ENCODE measurements at regions of chr19 and their contacts with region 1.

Region 1: GRCh38 chr19:2151339-2152229 is at the start of gene AP3D1:
- DNase-seq: peak; percentile 100
- H3K4me3 ChIP-seq: peak within 1 kb of the TSS; percentile 42 to 83
- H3K4me3 Mint-ChIP-seq: peak within 1 kb of the TSS; percentile 76 to 89 (median 84)
- H3K27ac ChIP-seq: peak within 1 kb of the TSS; percentile 94
- H3K27ac Mint-ChIP-seq: peak within 1 kb of the TSS; percentile 89 to 98 (median 95)
- H3K4me1 ChIP-seq: peaks cover 42% of the 10 kb centered on the region
- H3K4me1 Mint-ChIP-seq: peaks cover 23 to 43% (median 35%) of the 10 kb centered on the region in 4 donors
- H3K27me3 ChIP-seq: no peaks in the 10 kb centered on the region
- H3K27me3 Mint-ChIP-seq: no peaks in the 10 kb centered on the region
- total RNA-seq, gene AP3D1: 80.6 to 87.2 TPM

Region 2: GRCh38 chr19:1942078-1942933 is 209.3 kb before region 1 on chr19:
- CTCF ChIA-PET with region 1: no interaction called
- POLR2A ChIA-PET with region 1: interaction called, 6 read pairs
- intact Hi-C with region 1: loop called (anchors 1 kb)
- DNase-seq: peak; percentile 78 to 89 (median 84)
- H3K4me3 ChIP-seq: peak overlapping the region; percentile 81 to 99
- H3K4me3 Mint-ChIP-seq: peak overlapping the region; percentile 90 to 99 (median 97)
- H3K27ac ChIP-seq: peak overlapping the region; percentile 91
- H3K27ac Mint-ChIP-seq: peak overlapping the region; percentile 97 to 100 (median 99)
- H3K4me1 ChIP-seq: peaks cover 45% of the 10 kb centered on the region
- H3K4me1 Mint-ChIP-seq: peaks cover 15 to 49% (median 33%) of the 10 kb centered on the region in 4 donors
- H3K27me3 ChIP-seq: no peaks in the 10 kb centered on the region
- H3K27me3 Mint-ChIP-seq: peaks cover 0 to 2% of the 10 kb centered on the region in 2 donors

Region 3: GRCh38 chr19:2041683-2042484 is 109.7 kb before region 1 on chr19:
- CTCF ChIA-PET with region 1: no interaction called
- POLR2A ChIA-PET with region 1: interaction called, 3 read pairs
- intact Hi-C with region 1: loop called (anchors 5 kb)
- DNase-seq: peak; percentile 99 to 100 (median 99)
- H3K4me3 ChIP-seq: peak overlapping the region; percentile 36 to 57
- H3K4me3 Mint-ChIP-seq: peak overlapping the region; percentile 28 to 74 (median 60)
- H3K27ac ChIP-seq: peak overlapping the region; percentile 97
- H3K27ac Mint-ChIP-seq: peak overlapping the region; percentile 92 to 98 (median 96)
- H3K4me1 ChIP-seq: peaks cover 61% of the 10 kb centered on the region
- H3K4me1 Mint-ChIP-seq: peaks cover 9 to 51% (median 27%) of the 10 kb centered on the region in 4 donors
- H3K27me3 ChIP-seq: no peaks in the 10 kb centered on the region
- H3K27me3 Mint-ChIP-seq: no peaks in the 10 kb centered on the region

Region 4: DNA sequence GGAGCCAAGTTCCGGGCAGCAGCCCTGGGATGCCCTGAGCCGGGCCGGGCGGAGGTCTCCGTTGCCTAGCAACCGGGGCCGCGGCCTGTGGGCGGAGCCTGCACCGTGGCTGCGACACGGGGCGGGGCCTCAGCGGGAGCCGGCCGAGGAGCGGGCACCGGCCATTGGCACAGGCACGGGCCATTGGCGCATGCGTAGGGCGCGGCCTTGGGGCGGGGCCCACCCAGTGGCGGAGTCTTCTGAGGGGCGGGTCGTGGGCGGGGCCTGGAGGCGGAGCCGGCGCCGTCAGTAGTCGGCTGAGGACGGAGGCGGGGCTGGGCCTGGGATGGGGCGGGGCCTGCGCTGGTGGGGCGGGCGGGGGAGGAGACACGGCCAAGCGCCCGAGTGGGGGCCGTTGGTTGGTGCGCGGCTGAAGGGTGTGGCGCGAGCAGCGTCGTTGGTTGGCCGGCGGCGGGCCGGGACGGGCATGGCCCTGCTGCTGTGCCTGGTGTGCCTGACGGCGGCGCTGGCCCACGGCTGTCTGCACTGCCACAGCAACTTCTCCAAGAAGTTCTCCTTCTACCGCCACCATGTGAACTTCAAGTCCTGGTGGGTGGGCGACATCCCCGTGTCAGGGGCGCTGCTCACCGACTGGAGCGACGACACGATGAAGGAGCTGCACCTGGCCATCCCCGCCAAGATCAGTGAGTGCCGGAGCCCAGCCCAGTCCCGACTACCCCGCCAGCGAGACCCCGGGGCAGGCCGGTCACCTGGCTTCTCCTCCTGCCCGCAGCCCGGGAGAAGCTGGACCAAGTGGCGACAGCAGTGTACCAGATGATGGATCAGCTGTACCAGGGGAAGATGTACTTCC is 54.9 kb before region 1 on chr19 and contains the start of gene IZUMO4:
- CTCF ChIA-PET with region 1: interaction called, 4 read pairs
- POLR2A ChIA-PET with region 1: interaction called, 3 read pairs
- intact Hi-C with region 1: loop called (anchors 1 kb)
- DNase-seq: peak; percentile 98 to 100 (median 99)
- H3K4me3 ChIP-seq: peak within 1 kb of the TSS; percentile 49 to 85
- H3K4me3 Mint-ChIP-seq: peak within 1 kb of the TSS; percentile 91 to 97 (median 96)
- H3K27ac ChIP-seq: peak within 1 kb of the TSS; percentile 81
- H3K27ac Mint-ChIP-seq: peak within 1 kb of the TSS; percentile 95 to 99 (median 96)
- H3K4me1 ChIP-seq: peaks cover 38% of the 10 kb centered on the region
- H3K4me1 Mint-ChIP-seq: peaks cover 12 to 44% (median 28%) of the 10 kb centered on the region in 4 donors
- H3K27me3 ChIP-seq: no peaks in the 10 kb centered on the region
- H3K27me3 Mint-ChIP-seq: no peaks in the 10 kb centered on the region
- total RNA-seq, gene IZUMO4: 18.6 to 22.1 TPM

Region 5: GRCh38 chr19:2236314-2237050 is 84.9 kb after region 1 on chr19 and contains the starts of genes PLEKHJ1 and SF3A2:
- CTCF ChIA-PET with region 1: interaction called, 7 read pairs
- POLR2A ChIA-PET with region 1: interaction called, 11 read pairs
- intact Hi-C with region 1: loop called (anchors 1 kb)
- DNase-seq: peak; percentile 98 to 100 (median 99)
- H3K4me3 ChIP-seq: peak within 1 kb of the TSS; percentile 38 to 88
- H3K4me3 Mint-ChIP-seq: peak within 1 kb of the TSS; percentile 95 to 100 (median 98)
- H3K27ac ChIP-seq: peak within 1 kb of the TSS; percentile 98
- H3K27ac Mint-ChIP-seq: peak within 1 kb of the TSS; percentile 97 to 100 (median 99)
- H3K4me1 ChIP-seq: peaks cover 62% of the 10 kb centered on the region
- H3K4me1 Mint-ChIP-seq: peaks cover 39 to 67% (median 54%) of the 10 kb centered on the region in 4 donors
- H3K27me3 ChIP-seq: no peaks in the 10 kb centered on the region
- H3K27me3 Mint-ChIP-seq: peaks cover 2 to 5% of the 10 kb centered on the region in 2 donors
- total RNA-seq, gene PLEKHJ1: 64.9 to 65.3 TPM
- total RNA-seq, gene SF3A2: 140 to 141 TPM

Region 6: GRCh38 chr19:2371656-2372055 is 220.1 kb after region 1 on chr19:
- CTCF ChIA-PET with region 1: no interaction called
- POLR2A ChIA-PET with region 1: no interaction called
- intact Hi-C with region 1: no loop called
- DNase-seq: no peak
- H3K4me3 ChIP-seq: no peak overlapping the region
- H3K4me3 Mint-ChIP-seq: no peak overlapping the region
- H3K27ac ChIP-seq: no peak overlapping the region
- H3K27ac Mint-ChIP-seq: no peak overlapping the region
- H3K4me1 ChIP-seq: no peaks in the 10 kb centered on the region
- H3K4me1 Mint-ChIP-seq: peaks cover 0 to 7% (median 0%) of the 10 kb centered on the region in 4 donors
- H3K27me3 ChIP-seq: no peaks in the 10 kb centered on the region
- H3K27me3 Mint-ChIP-seq: peaks cover 4% of the 10 kb centered on the region in 2 donors

Region 7: DNA sequence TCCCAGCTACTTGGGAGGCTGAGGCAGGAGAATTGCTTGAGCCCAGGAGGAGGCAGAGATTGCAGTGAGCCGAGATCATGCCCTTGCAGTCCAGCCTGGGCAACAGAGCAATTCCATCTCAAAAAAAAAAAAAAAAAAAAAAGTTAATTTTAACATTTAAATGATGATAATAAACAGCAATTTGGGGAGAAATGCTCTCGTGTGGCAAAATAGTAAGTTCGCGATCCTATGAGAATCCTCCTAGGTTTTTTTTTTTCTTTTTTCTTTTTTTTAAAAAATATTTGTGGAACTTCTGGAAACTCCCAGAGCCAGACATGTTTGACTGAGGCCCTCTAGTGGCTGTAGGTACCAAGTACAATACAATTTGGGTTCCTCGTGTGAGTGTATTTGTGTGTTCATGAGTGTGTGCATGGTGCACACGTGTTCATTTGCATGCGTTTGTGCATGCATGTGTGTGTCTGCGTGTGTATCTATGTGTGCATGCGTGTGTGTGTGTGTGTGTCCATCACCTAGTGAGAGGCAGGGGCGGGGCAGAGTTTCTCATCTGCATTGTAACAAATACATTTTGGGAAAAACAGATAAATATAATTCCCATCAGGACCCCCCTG is 239.6 kb after region 1 on chr19:
- CTCF ChIA-PET with region 1: interaction called, 20 read pairs
- POLR2A ChIA-PET with region 1: no interaction called
- intact Hi-C with region 1: no loop called
- DNase-seq: peak; percentile 50 to 66 (median 51)
- H3K4me3 ChIP-seq: no peak overlapping the region
- H3K4me3 Mint-ChIP-seq: peak overlapping the region in 1 of 8 donors; percentile 78
- H3K27ac ChIP-seq: no peak overlapping the region
- H3K27ac Mint-ChIP-seq: peak overlapping the region in 2 of 7 donors; percentile 53 to 69
- H3K4me1 ChIP-seq: no peaks in the 10 kb centered on the region
- H3K4me1 Mint-ChIP-seq: peaks cover 2 to 15% (median 4%) of the 10 kb centered on the region in 4 donors
- H3K27me3 ChIP-seq: no peaks in the 10 kb centered on the region
- H3K27me3 Mint-ChIP-seq: peaks cover 2% of the 10 kb centered on the region in 2 donors